Adrenal gland (tissue), 19 donors: ENCODE measurements at regions of chr18 and their contacts with region 1.

Region 1: DNA sequence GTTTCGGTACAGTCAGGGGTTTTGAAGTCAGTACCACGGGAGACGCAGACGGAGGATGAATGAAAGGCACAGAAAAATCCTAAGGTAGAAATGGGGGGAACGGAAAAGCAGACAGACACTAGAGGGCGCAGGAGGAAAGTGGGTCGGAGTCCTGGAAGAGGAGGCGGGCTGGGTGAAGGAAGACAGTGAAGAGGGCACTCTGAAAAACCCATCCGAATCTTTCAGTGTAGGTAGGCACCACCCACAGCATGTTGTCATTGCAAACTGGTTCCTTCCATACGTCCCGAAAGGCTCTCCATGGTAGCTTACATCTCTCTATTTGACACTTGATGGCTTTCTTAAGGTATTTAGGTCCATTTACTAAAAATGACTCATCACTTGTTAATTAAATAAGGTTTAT is 18.5 kb upstream of the ZNF236 start:
- DNase-seq: peak; percentile 56 to 80 (median 69)
- H3K4me3 ChIP-seq: no peak overlapping the region
- H3K27ac ChIP-seq: no peak overlapping the region
- H3K4me1 ChIP-seq: peaks cover 0 to 9% of the 10 kb centered on the region in 2 donors
- H3K27me3 ChIP-seq: no peaks in the 10 kb centered on the region
- CTCF ChIP-seq: peak; percentile 52 to 82 (median 74)
- POLR2A ChIP-seq: no peak

Region 2: GRCh38 chr18:76875390-76876325 is 71.8 kb after region 1 on chr18:
- intact Hi-C with region 1: loop called (anchors 10 kb)
- DNase-seq: peak in 5 of 7 donors; percentile 29 to 73 (median 39)
- H3K4me3 ChIP-seq: no peak overlapping the region
- H3K27ac ChIP-seq: no peak overlapping the region
- H3K4me1 ChIP-seq: no peaks in the 10 kb centered on the region
- H3K27me3 ChIP-seq: no peaks in the 10 kb centered on the region
- CTCF ChIP-seq: peak; percentile 23 to 60 (median 42)
- POLR2A ChIP-seq: no peak

Region 3: GRCh38 chr18:76982841-76983587 is 179.2 kb after region 1 on chr18:
- intact Hi-C with region 1: loop called (anchors 5 to 10 kb)
- DNase-seq: peak; percentile 83 to 93 (median 89)
- H3K4me3 ChIP-seq: no peak overlapping the region
- H3K27ac ChIP-seq: no peak overlapping the region
- H3K4me1 ChIP-seq: peaks cover 0 to 6% of the 10 kb centered on the region in 2 donors
- H3K27me3 ChIP-seq: no peaks in the 10 kb centered on the region
- CTCF ChIP-seq: peak; percentile 81 to 92 (median 88)
- POLR2A ChIP-seq: no peak